Heart left ventricle (tissue), 16 donors: ENCODE measurements at regions of chr7 and their contacts with region 1.

Region 1: GRCh38 chr7:92590711-92591310 is 621 bp upstream of the FAM133B start:
- DNase-seq: peak in 1 of 5 donors; percentile 24
- ATAC-seq: no peak
- H3K4me3 ChIP-seq: peak overlapping the region; percentile 63 to 98 (median 90)
- H3K27ac ChIP-seq: peak overlapping the region in 10 of 12 donors; percentile 88 to 98 (median 93)
- H3K4me1 ChIP-seq: peaks cover 5 to 41% (median 28%) of the 10 kb centered on the region in 12 donors
- H3K27me3 ChIP-seq: no peaks in the 10 kb centered on the region
- CTCF ChIP-seq: no peak
- POLR2A ChIP-seq: no peak

Region 2: GRCh38 chr7:92528188-92528957 is 62.4 kb before region 1 on chr7 and contains the starts of genes PEX1 and RBM48:
- intact Hi-C with region 1: loop called in 3 of 10 experiments (anchors 2 to 5 kb)
- DNase-seq: peak; percentile 96 to 97 (median 96)
- ATAC-seq: peak; percentile 98 to 99 (median 99)
- H3K4me3 ChIP-seq: peak within 1 kb of the TSS; percentile 65 to 92 (median 84)
- H3K27ac ChIP-seq: peak within 1 kb of the TSS; percentile 45 to 92 (median 84)
- H3K4me1 ChIP-seq: peaks cover 0 to 41% (median 19%) of the 10 kb centered on the region in 12 donors
- H3K27me3 ChIP-seq: no peaks in the 10 kb centered on the region
- CTCF ChIP-seq: peak in 10 of 12 donors; percentile 28 to 76 (median 56)
- POLR2A ChIP-seq: peak in 1 of 2 donors; percentile 56
- total RNA-seq, gene PEX1: 10.7 to 19.9 (median 15.4) TPM
- total RNA-seq, gene RBM48: 6.5 to 13.7 (median 10.8) TPM

Region 3: DNA sequence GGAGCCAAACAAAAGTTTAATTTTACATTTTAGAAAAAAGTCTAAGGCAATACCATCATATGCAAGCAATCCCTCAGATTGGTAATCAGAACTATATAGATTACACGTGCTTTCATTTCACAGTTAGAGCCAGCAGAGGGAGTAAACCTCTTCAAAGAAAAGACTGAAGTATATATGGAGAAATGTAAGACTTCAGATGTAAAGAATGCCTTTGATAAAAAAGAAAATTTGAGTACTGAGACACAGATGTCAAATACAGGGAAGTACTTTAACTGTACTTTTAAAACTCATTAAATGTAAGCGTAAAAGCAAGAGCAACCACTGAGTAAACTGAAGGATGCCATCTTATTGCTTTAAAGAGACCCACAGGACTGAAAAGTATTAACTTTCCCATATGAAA is 100.8 kb after region 1 on chr7:
- intact Hi-C with region 1: no loop called
- DNase-seq: no peak
- ATAC-seq: no peak
- H3K4me3 ChIP-seq: no peak overlapping the region
- H3K27ac ChIP-seq: no peak overlapping the region
- H3K4me1 ChIP-seq: peaks cover 0 to 30% (median 13%) of the 10 kb centered on the region in 12 donors
- H3K27me3 ChIP-seq: no peaks in the 10 kb centered on the region
- CTCF ChIP-seq: peak; percentile 24 to 65 (median 49)
- POLR2A ChIP-seq: no peak